Endothelial cell of umbilical vein (primary cell): ENCODE measurements at regions of chr12 and their contacts with region 1.

Region 1: DNA sequence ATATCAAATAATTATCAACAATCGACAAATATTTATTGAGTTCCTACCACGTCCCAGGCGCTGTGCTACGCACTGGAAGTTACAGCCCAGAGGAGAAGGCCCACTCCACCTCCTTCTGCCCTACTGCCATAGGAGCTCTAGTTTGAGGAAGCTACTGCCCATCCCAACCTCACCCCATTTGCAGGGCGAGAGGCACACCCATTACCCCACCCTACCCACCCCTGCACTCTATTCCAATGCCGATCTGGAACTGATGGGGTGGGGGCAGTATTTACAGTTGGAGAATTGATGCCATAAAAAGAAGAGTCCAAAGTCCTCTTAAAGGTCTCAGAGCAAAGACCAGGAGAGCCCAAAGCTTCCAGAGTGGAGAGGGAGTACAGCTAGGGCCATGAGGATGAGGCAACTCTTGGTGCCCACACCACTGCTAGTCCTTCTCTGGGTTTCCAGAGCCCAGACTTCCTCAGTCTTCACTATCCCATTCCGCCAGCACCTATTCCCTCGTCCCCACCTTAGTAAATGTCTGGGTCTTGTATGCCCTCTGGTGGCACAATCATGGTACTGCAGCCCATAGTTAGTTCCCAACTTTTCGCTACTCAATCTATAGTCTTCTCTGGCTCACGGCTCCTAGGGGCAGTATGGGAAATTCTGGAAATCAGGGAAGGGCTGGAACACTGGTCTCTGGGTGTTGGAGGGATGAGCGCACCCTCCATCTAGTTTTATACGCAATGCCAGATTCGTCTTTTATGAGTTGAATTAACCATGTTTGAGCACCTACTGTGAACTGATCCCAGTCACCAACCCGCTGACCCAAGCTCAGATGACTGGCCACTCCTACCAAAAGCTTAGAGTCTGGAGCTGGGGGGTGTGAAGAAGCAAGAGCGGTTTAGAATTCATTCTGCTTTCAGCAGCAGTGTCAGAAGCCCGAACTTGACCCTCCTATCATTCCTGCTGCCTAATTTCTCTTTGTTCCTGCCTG is 6.9 kb upstream of the ADCY6 start:
- DNase-seq: peak; percentile 84
- H3K4me3 ChIP-seq: no peak overlapping the region
- H3K27ac ChIP-seq: no peak overlapping the region
- H3K4me1 ChIP-seq: no peaks in the 10 kb centered on the region
- H3K27me3 ChIP-seq: peaks cover 0 to 1% of the 10 kb centered on the region in 2 experiments
- CTCF ChIP-seq: peak; percentile 84 to 89
- POLR2A ChIP-seq: no peak

Region 2: DNA sequence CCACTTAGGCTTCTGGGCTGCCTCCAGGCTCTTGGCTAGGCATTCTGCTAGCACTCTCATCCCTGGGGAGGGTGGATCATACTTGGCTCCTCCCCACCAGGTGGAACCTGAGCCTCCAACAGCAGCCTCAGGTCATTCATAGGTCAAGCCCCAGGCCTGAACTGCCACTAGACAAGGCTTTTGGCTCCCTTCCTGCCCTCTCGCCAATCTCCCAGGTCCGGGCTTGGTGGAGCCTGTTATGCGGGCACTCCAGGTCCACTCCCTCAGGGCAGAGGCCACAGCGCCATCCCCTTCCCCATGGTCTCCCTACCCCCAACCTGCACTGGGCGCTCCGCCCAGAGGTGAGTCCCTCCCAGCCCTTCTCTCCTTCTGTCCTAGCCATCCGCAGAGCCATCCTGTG is 1561.1 kb before region 1 on chr12:
- CTCF ChIA-PET with region 1: no interaction called
- POLR2A ChIA-PET with region 1: no interaction called
- dilution Hi-C with region 1: no loop called
- intact Hi-C with region 1: no loop called
- DNase-seq: no peak
- H3K4me3 ChIP-seq: no peak overlapping the region
- H3K27ac ChIP-seq: no peak overlapping the region
- H3K4me1 ChIP-seq: peaks cover 6% of the 10 kb centered on the region
- H3K27me3 ChIP-seq: no peaks in the 10 kb centered on the region
- CTCF ChIP-seq: no peak
- POLR2A ChIP-seq: no peak

Region 3: DNA sequence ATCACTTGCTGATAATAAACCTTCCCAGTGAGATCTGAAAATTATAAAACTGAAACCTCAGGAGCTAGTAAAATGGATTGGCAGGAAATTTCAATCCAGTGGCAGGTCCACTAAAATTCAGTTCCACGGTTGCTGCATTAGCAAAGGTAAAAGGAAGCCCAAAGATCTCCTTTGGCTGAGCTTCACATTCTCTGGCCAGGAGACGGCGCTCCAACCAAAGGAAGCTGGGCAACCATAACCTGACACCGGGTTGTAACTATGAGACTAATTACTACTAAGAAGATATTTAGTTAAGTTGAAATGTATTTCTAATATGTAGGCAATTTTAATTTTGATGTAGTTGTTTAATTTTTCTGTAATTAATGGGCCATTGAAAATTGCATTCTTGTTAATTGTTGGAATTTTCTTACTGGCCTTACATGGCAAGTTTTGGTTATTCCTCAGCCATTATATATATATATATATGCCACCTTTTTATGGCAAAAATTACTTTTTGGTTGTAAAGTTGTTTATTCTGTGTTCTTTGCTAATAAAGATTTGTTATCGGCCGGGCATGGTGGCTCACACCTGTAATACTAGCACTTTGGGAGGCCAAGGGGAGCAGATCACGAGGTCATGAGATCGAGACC is 253.4 kb before region 1 on chr12:
- CTCF ChIA-PET with region 1: interaction called, 19 read pairs
- POLR2A ChIA-PET with region 1: no interaction called
- dilution Hi-C with region 1: no loop called
- intact Hi-C with region 1: loop called (anchors 1 kb)
- DNase-seq: peak; percentile 41
- H3K4me3 ChIP-seq: no peak overlapping the region
- H3K27ac ChIP-seq: no peak overlapping the region
- H3K4me1 ChIP-seq: no peaks in the 10 kb centered on the region
- H3K27me3 ChIP-seq: peaks cover 2 to 4% of the 10 kb centered on the region in 2 experiments
- CTCF ChIP-seq: peak; percentile 64 to 76
- POLR2A ChIP-seq: no peak

Region 4: DNA sequence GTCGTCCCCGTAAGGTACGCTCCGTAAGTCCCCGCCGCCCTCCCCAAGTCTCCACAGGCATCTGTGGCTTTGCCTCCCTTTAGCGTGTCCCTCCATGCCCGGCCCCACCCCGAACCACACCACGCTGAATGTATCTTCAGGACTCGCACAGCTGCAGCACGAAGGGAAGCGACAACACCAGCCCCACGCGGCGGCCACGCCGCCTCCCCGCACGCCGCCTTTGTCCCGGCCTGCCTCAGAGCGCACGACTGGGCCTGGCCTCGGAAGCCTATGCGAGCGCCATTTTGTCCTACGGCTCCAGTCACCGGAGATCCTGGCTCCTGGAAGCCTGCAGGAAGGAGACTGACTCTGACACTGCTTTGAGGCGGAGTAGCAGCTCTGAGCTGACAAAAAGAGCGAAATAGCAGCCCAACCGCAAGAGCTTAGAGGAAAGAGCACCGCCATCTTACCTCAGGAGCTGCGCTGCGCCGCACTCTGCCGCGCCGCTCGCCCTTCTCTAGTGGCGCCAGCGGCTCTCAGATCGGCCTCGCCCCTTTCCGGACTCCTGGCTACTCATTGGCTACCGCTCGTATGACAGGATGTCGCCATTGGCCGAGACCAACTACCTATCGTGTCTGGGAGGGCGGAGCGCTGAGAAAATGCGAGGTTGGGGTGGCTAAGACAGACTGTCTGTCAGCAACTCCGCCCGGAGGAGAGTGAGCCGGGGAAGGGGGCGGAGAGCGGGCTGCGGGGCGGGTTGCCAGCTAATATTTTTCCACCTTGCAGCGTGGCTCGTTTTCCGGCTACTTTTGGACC is 113.8 kb before region 1 on chr12 and contains the start of gene KANSL2:
- CTCF ChIA-PET with region 1: no interaction called
- POLR2A ChIA-PET with region 1: no interaction called
- dilution Hi-C with region 1: no loop called
- intact Hi-C with region 1: loop called (anchors 1 kb)
- DNase-seq: peak; percentile 99
- H3K4me3 ChIP-seq: peak within 1 kb of the TSS; percentile 46 to 94 (median 56)
- H3K27ac ChIP-seq: peak within 1 kb of the TSS; percentile 66
- H3K4me1 ChIP-seq: peaks cover 30% of the 10 kb centered on the region
- H3K27me3 ChIP-seq: no peaks in the 10 kb centered on the region
- CTCF ChIP-seq: peak in 1 of 2 donors; percentile 3
- POLR2A ChIP-seq: peak; percentile 99
- total RNA-seq, gene KANSL2: 35.8 and 40.6 TPM in 2 replicates

Region 5: GRCh38 chr12:48716493-48717251 is 79.1 kb before region 1 on chr12 and contains the start of gene CCNT1:
- CTCF ChIA-PET with region 1: no interaction called
- POLR2A ChIA-PET with region 1: no interaction called
- dilution Hi-C with region 1: no loop called
- intact Hi-C with region 1: no loop called
- DNase-seq: peak; percentile 100
- H3K4me3 ChIP-seq: peak within 1 kb of the TSS; percentile 65 to 92 (median 71)
- H3K27ac ChIP-seq: peak within 1 kb of the TSS; percentile 90
- H3K4me1 ChIP-seq: peaks cover 16% of the 10 kb centered on the region
- H3K27me3 ChIP-seq: no peaks in the 10 kb centered on the region
- CTCF ChIP-seq: peak; percentile 10 to 31
- POLR2A ChIP-seq: peak; percentile 61
- total RNA-seq, gene CCNT1: 33.0 and 35.1 TPM in 2 replicates

Region 6: GRCh38 chr12:48758221-48758620 is 37.5 kb before region 1 on chr12:
- CTCF ChIA-PET with region 1: interaction called, 606 read pairs
- POLR2A ChIA-PET with region 1: interaction called, 4 read pairs
- dilution Hi-C with region 1: no loop called
- intact Hi-C with region 1: loop called (anchors 1 kb)
- DNase-seq: no peak
- H3K4me3 ChIP-seq: no peak overlapping the region
- H3K27ac ChIP-seq: no peak overlapping the region
- H3K4me1 ChIP-seq: no peaks in the 10 kb centered on the region
- H3K27me3 ChIP-seq: peaks cover 0 to 3% of the 10 kb centered on the region in 2 experiments
- CTCF ChIP-seq: no peak
- POLR2A ChIP-seq: no peak

Region 7: DNA sequence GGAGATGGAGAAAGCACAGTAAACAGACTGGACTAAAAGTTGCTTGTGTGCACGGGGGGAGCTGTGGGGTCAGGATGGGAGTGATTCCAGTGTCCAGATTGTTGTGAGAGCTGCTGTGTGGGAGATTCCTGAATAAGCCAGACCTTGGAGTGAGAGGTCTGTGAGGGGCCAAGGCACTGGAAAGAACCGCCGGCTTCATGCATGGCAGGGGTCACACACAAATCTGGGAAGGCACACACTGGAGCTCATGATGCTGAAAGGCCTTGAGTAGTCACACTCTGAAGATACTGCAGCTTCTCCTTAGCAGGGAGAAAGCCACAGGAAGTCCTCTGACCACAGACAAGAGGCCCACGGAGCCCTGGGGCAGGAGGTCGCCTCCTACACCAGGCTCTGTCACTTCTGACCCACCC is 30.0 kb before region 1 on chr12:
- CTCF ChIA-PET with region 1: interaction called, 606 read pairs
- POLR2A ChIA-PET with region 1: interaction called, 10 read pairs
- dilution Hi-C with region 1: no loop called
- intact Hi-C with region 1: no loop called
- DNase-seq: no peak
- H3K4me3 ChIP-seq: no peak overlapping the region
- H3K27ac ChIP-seq: no peak overlapping the region
- H3K4me1 ChIP-seq: no peaks in the 10 kb centered on the region
- H3K27me3 ChIP-seq: no peaks in the 10 kb centered on the region
- CTCF ChIP-seq: no peak
- POLR2A ChIP-seq: no peak

Region 8: GRCh38 chr12:48779869-48780268 is 15.9 kb before region 1 on chr12:
- CTCF ChIA-PET with region 1: interaction called, 18 read pairs
- POLR2A ChIA-PET with region 1: no interaction called
- dilution Hi-C with region 1: no loop called
- intact Hi-C with region 1: loop called (anchors 2 kb)
- DNase-seq: peak; percentile 82
- H3K4me3 ChIP-seq: no peak overlapping the region
- H3K27ac ChIP-seq: peak overlapping the region; percentile 69
- H3K4me1 ChIP-seq: peaks cover 16% of the 10 kb centered on the region
- H3K27me3 ChIP-seq: no peaks in the 10 kb centered on the region
- CTCF ChIP-seq: no peak
- POLR2A ChIP-seq: no peak

Region 9: GRCh38 chr12:48814262-48815125 is 18.7 kb after region 1 on chr12:
- CTCF ChIA-PET with region 1: interaction called, 10 read pairs
- POLR2A ChIA-PET with region 1: no interaction called
- dilution Hi-C with region 1: no loop called
- intact Hi-C with region 1: no loop called
- DNase-seq: peak; percentile 73
- H3K4me3 ChIP-seq: peak overlapping the region; percentile 45 to 63 (median 54)
- H3K27ac ChIP-seq: peak overlapping the region; percentile 10
- H3K4me1 ChIP-seq: peaks cover 20% of the 10 kb centered on the region
- H3K27me3 ChIP-seq: no peaks in the 10 kb centered on the region
- CTCF ChIP-seq: peak; percentile 98 to 100
- POLR2A ChIP-seq: no peak

Region 10: DNA sequence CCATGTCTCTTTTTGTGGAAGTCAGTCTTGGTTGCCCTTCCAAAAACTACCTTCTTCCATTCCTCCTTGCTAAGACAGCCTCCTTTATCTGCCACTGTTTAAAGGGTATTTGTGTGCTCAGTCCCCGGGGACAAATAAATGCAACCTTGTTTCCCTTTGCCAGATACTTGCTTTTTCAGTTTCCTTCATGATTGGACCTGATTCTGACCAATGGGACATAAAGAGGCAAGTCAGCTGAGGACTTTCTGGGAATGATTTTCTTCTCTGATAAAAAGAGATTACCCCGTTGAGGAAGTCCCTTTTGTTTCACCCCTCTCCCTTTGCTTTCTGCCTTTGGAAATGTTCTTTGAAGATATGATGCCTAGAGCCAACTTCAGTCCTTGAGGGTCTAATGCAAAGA is 342.8 kb after region 1 on chr12:
- CTCF ChIA-PET with region 1: no interaction called
- POLR2A ChIA-PET with region 1: no interaction called
- dilution Hi-C with region 1: no loop called
- intact Hi-C with region 1: no loop called
- DNase-seq: no peak
- H3K4me3 ChIP-seq: no peak overlapping the region
- H3K27ac ChIP-seq: no peak overlapping the region
- H3K4me1 ChIP-seq: no peaks in the 10 kb centered on the region
- H3K27me3 ChIP-seq: no peaks in the 10 kb centered on the region
- CTCF ChIP-seq: no peak
- POLR2A ChIP-seq: no peak